ENCODE measurements at regions of chr7 and their contacts with region 1.

Region 1: DNA sequence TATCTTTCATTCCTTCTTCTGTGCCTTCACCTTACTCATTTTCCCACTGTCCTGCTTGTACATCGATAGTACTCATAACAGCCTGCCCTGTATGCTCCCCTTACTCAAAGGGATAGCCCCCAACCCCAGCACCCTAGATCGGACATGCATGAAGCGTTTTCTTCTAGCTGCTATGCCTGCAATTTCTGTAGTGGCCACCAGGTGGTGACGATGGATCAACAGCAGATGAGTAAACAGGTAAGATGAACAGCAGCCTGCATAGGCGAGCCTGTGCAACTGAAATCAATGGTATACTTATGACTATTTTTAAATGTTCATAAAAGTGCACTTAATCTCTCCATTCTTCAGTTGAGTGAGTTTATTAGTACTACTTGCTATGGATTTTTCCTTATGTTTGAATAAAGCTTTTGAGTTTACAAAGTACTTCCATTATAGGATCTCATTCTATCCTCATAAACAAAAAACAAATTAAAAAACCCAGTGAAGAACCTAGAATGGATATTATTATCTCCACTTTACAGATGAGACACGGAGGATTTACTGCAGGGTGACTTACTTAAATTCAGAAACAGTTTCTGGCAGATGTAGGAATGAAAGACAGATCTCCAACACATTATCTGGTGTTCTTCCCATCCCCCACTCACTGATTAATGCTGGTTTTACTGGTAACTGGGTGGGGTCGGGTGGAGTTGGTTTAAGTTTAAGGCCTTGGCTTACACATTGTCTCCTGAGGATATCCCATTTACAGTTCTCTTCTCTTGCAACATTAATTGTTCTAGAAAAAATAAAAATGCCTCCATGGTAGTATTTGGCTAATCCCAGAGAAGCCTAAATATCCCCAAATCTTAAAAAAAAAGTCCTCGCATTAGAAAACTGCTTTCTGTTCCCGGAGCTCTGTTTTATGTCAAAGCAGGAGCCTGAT is 222.1 kb downstream of the GLI3 start:
- DNase-seq: peak; percentile 29
- ATAC-seq: peak; percentile 64
- H3K4me3 ChIP-seq: no peak overlapping the region
- H3K27ac ChIP-seq: no peak overlapping the region
- H3K4me1 ChIP-seq: no peaks in the 10 kb centered on the region
- H3K27me3 ChIP-seq: peaks cover 0 to 5% of the 10 kb centered on the region in 2 experiments; a peak in 2 of 5 replicates
- CTCF ChIP-seq: peak; percentile 75
- EP300 ChIP-seq: no peak
- POLR2A ChIP-seq: no peak
- RAD21 ChIP-seq: no peak

Region 2: DNA sequence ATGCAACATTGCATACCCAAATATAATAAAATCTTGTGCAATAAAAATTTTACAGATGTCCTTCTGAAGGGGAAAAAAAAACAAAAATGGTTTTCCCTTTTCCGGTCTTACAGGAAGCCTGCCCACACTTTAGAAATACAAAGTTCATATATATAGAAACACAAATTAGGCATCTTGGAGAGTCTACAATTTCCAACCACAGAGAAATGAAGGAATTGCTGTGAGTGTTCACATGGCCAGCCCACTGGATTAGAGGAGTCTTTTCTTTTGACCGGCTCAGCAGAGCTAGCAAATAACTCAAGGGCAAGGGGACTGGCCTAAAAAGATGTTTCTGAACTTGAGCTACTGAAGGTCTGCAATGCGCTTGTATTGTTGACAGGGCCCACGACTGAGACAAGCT is 129.7 kb after region 1 on chr7:
- CTCF ChIA-PET with region 1: no interaction called
- POLR2A ChIA-PET with region 1: no interaction called
- in situ Hi-C with region 1: no loop called
- intact Hi-C with region 1: loop called (anchors 5 kb)
- DNase-seq: no peak
- ATAC-seq: no peak
- H3K4me3 ChIP-seq: no peak overlapping the region
- H3K27ac ChIP-seq: no peak overlapping the region
- H3K4me1 ChIP-seq: no peaks in the 10 kb centered on the region
- H3K27me3 ChIP-seq: peaks cover 0 to 28% of the 10 kb centered on the region in 2 experiments; a peak in 1 of 5 replicates
- CTCF ChIP-seq: no peak
- EP300 ChIP-seq: no peak
- POLR2A ChIP-seq: no peak
- RAD21 ChIP-seq: no peak

Region 3: DNA sequence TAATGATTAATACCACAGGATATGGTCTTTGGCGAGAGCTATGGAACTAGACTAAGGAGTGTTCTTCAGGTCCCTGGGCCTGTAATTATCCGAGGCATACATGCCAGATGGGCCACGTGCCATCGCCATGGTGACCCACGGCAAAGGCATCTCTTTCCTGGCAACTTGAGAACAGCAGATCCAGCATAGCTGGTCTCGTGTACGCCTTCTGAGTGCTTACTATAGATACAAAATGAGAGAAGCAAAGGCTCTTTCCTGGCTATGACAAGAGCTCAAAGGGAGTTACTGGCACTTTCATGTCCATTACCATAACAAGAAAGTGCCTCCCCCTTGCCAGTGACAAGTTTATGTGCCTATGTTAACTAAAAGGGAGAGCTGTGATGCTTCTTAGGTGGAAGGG is 248.1 kb after region 1 on chr7:
- CTCF ChIA-PET with region 1: no interaction called
- POLR2A ChIA-PET with region 1: no interaction called
- in situ Hi-C with region 1: no loop called
- intact Hi-C with region 1: no loop called
- DNase-seq: no peak
- ATAC-seq: no peak
- H3K4me3 ChIP-seq: no peak overlapping the region
- H3K27ac ChIP-seq: no peak overlapping the region
- H3K4me1 ChIP-seq: no peaks in the 10 kb centered on the region
- H3K27me3 ChIP-seq: no peaks in the 10 kb centered on the region
- CTCF ChIP-seq: no peak
- EP300 ChIP-seq: no peak
- POLR2A ChIP-seq: no peak
- RAD21 ChIP-seq: no peak

Region 4: DNA sequence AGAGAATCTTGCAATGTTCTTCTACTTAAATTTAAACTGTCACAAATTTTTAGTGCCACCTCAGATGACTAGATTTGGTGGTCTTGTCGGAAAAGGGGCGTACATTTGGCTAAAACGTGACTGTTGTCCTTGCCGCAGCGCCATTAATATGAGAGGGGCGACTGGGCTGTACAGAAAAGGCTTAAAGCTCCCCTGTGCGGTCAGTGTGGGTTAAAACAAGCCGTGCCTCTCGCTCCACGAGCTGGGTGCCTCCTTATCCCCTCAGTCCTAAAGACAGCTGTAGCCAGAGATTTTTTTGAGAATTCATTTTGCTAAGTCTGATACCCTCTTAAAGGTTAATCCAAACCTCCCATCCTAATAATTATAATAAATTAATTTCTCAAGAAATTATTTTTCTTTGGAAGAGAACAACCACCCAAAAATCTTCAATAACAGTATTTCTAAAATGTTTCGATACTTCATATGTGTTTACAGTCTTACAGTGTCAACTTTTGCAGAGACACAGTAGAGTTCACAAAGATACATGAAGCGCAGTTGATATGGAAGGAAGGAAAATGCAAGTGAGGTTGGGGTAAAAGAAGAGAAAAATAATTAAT is 828.4 kb after region 1 on chr7:
- CTCF ChIA-PET with region 1: no interaction called
- POLR2A ChIA-PET with region 1: no interaction called
- in situ Hi-C with region 1: no loop called
- intact Hi-C with region 1: loop called (anchors 1 kb)
- DNase-seq: peak; percentile 31
- ATAC-seq: peak; percentile 98
- H3K4me3 ChIP-seq: no peak overlapping the region
- H3K27ac ChIP-seq: no peak overlapping the region
- H3K4me1 ChIP-seq: no peaks in the 10 kb centered on the region
- H3K27me3 ChIP-seq: no peaks in the 10 kb centered on the region
- CTCF ChIP-seq: peak; percentile 73
- EP300 ChIP-seq: no peak
- POLR2A ChIP-seq: no peak
- RAD21 ChIP-seq: peak; percentile 35; the same call in 1 of the 2 replicates